ENCODE measurements at regions of chr15 and their contacts with region 1.

Region 1: DNA sequence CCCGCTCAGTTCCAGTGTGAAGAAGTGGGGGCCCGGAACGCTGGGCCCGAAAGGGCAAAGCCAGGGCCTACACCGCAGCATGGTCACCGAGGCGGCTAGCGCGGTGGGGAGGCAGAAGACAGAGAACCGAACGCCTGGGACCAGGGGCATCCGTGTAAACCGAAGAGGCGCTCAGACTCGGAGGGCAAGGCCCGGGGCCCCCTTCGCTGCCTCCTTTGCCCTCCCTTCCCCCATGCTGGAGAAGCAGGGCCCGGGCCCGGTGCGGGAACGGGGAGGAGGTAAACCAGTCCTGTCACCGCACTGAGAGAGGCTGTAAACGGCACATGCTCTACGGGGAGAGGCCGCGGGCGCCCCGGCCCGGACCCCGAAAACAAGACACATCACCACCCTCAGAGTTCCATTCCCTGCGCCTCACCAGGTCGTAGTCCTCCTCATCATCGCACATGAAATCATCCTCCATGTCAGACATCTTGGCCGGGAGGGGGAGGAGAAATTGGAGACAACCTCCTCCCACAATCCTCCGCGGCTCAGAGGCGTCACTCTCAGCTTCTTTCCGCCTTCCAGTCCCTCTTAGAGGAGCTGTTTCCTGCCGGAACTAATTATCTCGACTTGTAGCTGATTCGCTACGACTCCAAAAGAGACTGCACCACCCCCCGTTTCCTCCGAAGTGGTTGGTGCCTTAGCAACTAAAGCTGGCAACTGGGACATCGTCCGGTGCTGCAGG is at the start of gene COPS2:
- DNase-seq: peak; percentile 69 to 96 (median 94)
- ATAC-seq: peak; percentile 99
- H3K4me3 ChIP-seq: peak within 1 kb of the TSS; percentile 88
- H3K4me3 Mint-ChIP-seq: peak within 1 kb of the TSS; percentile 95 to 100 (median 98)
- H3K27ac ChIP-seq: peak within 1 kb of the TSS; percentile 93
- H3K27ac Mint-ChIP-seq: peak within 1 kb of the TSS; percentile 93 to 100 (median 97)
- H3K4me1 ChIP-seq: peaks cover 9 to 25% of the 10 kb centered on the region in 2 donors
- H3K4me1 Mint-ChIP-seq: peaks cover 40 to 72% (median 59%) of the 10 kb centered on the region in 7 donors
- H3K27me3 ChIP-seq: no peaks in the 10 kb centered on the region
- H3K27me3 Mint-ChIP-seq: no peaks in the 10 kb centered on the region
- total RNA-seq, gene COPS2: 51.0 to 91.5 (median 63.6) TPM

Region 2: GRCh38 chr15:48810414-48811317 is 344.6 kb before region 1 on chr15 and contains the start of gene CEP152:
- CTCF ChIA-PET with region 1: no interaction called
- POLR2A ChIA-PET with region 1: interaction called, 11 read pairs
- intact Hi-C with region 1: loop called (anchors 1 kb)
- DNase-seq: peak; percentile 91 to 99 (median 98)
- ATAC-seq: peak; percentile 98
- H3K4me3 ChIP-seq: peak within 1 kb of the TSS; percentile 78
- H3K4me3 Mint-ChIP-seq: peak within 1 kb of the TSS; percentile 82 to 96 (median 89)
- H3K27ac ChIP-seq: peak within 1 kb of the TSS; percentile 76
- H3K27ac Mint-ChIP-seq: peak within 1 kb of the TSS; percentile 14 to 96 (median 87)
- H3K4me1 ChIP-seq: peaks cover 9 to 13% of the 10 kb centered on the region in 2 donors
- H3K4me1 Mint-ChIP-seq: peaks cover 12 to 38% (median 33%) of the 10 kb centered on the region in 7 donors
- H3K27me3 ChIP-seq: no peaks in the 10 kb centered on the region
- H3K27me3 Mint-ChIP-seq: peaks cover 0 to 24% (median 0%) of the 10 kb centered on the region in 5 donors
- total RNA-seq, gene CEP152: 6.2 to 26.3 (median 17.0) TPM

Region 3: DNA sequence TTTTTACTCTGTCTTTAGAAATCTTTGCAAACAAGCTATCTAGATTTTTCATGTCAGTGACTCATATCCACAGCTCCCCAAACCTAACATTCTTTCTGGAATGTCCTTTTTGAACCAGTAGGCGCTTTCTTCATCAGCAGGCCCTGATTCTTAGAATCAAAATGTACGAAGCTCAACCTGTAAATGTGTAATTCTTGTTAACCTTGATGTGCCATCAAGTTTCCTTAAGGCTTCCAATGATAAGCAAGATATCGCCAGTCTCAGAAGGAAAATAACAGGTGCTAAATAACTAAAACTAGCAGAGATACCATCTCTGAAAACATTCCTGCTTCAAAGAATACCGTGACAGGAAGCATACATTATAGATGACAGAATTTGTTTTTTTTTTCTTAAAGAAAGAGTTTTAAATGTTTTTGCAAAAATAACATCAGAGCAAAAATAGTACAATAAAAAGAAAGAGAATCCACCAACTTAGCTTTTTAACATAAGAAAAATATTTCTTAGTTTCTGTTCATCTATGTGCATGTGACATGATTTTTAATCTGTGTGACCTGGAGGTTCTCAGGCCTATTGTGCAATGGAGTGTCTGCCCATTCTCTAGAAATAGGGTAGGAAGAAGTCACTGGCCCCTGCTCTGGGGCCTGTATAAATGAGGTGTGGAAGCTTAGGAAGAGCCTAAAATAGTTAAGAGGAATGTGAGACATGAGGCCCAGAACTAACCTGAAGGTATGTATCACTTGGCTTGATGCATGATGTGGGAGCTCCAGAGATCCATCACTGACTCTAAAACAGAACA is 94.4 kb before region 1 on chr15:
- CTCF ChIA-PET with region 1: no interaction called
- POLR2A ChIA-PET with region 1: interaction called, 4 read pairs
- intact Hi-C with region 1: loop called in 1 of 2 experiments (anchors 1 kb)
- DNase-seq: peak in 2 of 9 donors; percentile 25 to 35
- ATAC-seq: no peak
- H3K4me3 ChIP-seq: no peak overlapping the region
- H3K4me3 Mint-ChIP-seq: peak overlapping the region in 9 of 10 donors; percentile 13 to 82 (median 71)
- H3K27ac ChIP-seq: peak overlapping the region; percentile 53
- H3K27ac Mint-ChIP-seq: peak overlapping the region; percentile 4 to 97 (median 94)
- H3K4me1 ChIP-seq: peaks cover 0 to 50% of the 10 kb centered on the region in 2 donors
- H3K4me1 Mint-ChIP-seq: peaks cover 4 to 30% (median 21%) of the 10 kb centered on the region in 7 donors
- H3K27me3 ChIP-seq: no peaks in the 10 kb centered on the region
- H3K27me3 Mint-ChIP-seq: peaks cover 0 to 5% (median 0%) of the 10 kb centered on the region in 5 donors